ENCODE measurements at regions of chr9 and their contacts with region 1.

Region 1: DNA sequence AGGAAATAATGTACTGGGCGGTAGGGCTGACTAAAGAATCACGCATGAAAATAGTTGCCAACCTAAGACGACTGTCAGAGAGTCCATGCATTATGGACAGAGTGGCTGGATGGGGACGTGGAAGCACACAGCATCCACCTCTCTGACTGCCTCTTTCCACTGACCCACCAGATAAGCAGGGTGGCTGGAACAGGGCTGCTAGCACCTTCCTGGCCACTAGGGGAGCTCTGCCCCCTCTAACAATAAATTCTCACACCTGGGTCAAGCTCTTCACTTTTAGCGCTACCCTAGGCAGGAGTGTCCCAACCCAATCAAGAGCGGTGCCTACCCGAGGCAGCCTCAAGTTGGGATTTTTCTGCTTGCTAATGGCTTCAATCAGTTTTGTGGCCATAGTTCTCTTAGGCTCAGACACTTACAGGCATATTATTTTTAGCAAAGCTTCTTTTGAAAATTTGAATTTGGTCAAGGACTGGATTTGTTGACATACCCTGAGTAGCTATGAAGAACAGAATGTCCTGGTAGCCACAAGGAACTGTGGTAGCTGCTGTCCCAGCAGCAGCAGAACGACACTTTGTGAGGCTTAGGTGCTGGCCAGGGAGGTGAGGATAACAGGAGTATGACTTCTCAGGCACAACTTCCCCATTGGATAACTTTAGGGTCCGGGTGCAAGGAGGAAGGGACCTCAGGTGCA is 6.9 kb upstream of the TPM2 start:
- DNase-seq: peak; percentile 85
- H3K4me3 ChIP-seq: no peak overlapping the region; a peak in 1 of 4 replicates
- H3K27ac ChIP-seq: peak overlapping the region in 1 of 2 experiments; percentile 77; a peak in 1 of 4 replicates
- H3K4me1 ChIP-seq: 0 out of 4 replicates have a peak, but pooled peaks cover 0 to 1% of the 10 kb centered on the region in 2 experiments
- H3K27me3 ChIP-seq: no peaks in the 10 kb centered on the region
- CTCF ChIP-seq: peak; percentile 86
- EP300 ChIP-seq: no peak
- RAD21 ChIP-seq: peak; percentile 55

Region 2: DNA sequence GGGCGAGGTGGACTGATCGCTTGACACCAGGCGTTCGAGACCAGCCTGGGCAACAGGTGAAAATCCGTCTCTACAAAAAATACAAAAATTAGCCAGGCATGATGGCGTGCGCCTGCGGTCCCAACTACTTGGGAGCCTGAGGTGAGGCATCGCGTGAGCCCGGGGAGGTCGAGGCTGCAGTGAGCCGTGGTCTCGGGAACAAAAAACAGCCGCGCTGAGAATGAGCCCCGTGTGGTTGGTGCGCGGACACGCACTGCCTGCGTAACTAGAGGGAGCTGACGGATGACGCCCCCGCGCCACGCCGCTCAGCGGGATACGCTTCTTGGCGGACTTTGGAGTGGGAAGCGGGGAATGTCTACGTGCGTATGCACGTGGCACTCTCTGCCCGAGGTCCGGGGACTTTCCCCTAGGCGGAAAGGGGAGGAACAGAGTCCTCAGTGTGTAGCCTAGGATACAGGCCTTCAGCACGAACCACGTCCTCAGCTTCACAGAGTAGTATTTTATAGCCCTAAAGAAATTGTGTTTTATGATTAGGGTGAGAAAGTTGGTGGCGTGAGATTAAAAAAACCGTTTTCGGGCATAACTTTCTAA is 39.0 kb before region 1 on chr9 and contains the start of gene RMRP:
- CTCF ChIA-PET with region 1: interaction called, 38 read pairs
- POLR2A ChIA-PET with region 1: no interaction called
- DNase-seq: peak; percentile 91
- H3K4me3 ChIP-seq: peak within 1 kb of the TSS; percentile 70 to 82
- H3K27ac ChIP-seq: peak within 1 kb of the TSS; percentile 97 to 98
- H3K4me1 ChIP-seq: peaks cover 0 to 12% of the 10 kb centered on the region in 2 experiments; a peak in 1 of 4 replicates
- H3K27me3 ChIP-seq: no peaks in the 10 kb centered on the region
- CTCF ChIP-seq: 0 out of 2 replicates have a peak, but pooled peaks have one; percentile 27
- EP300 ChIP-seq: peak in 1 of 2 experiments; percentile 74; a peak in 2 of 4 replicates
- RAD21 ChIP-seq: no peak
- polyA plus RNA-seq, gene RMRP: 64.9 and 157 TPM in 2 replicates

Region 3: GRCh38 chr9:35675732-35676392 is 20.8 kb before region 1 on chr9:
- CTCF ChIA-PET with region 1: interaction called, 14 read pairs
- POLR2A ChIA-PET with region 1: interaction called, 4 read pairs
- DNase-seq: peak; percentile 96
- H3K4me3 ChIP-seq: peak overlapping the region; percentile 19 to 38; a peak in 2 of 4 replicates
- H3K27ac ChIP-seq: no peak overlapping the region; a peak in 1 of 4 replicates
- H3K4me1 ChIP-seq: peaks cover 0 to 13% of the 10 kb centered on the region in 2 experiments; a peak in 1 of 4 replicates
- H3K27me3 ChIP-seq: no peaks in the 10 kb centered on the region
- CTCF ChIP-seq: no peak
- EP300 ChIP-seq: no peak
- RAD21 ChIP-seq: no peak

Region 4: GRCh38 chr9:35716230-35716629 is 19.6 kb after region 1 on chr9:
- CTCF ChIA-PET with region 1: interaction called, 183 read pairs
- POLR2A ChIA-PET with region 1: interaction called, 3 read pairs
- DNase-seq: no peak
- H3K4me3 ChIP-seq: no peak overlapping the region
- H3K27ac ChIP-seq: no peak overlapping the region
- H3K4me1 ChIP-seq: no peaks in the 10 kb centered on the region
- H3K27me3 ChIP-seq: no peaks in the 10 kb centered on the region
- CTCF ChIP-seq: no peak
- EP300 ChIP-seq: no peak
- RAD21 ChIP-seq: no peak

Region 5: DNA sequence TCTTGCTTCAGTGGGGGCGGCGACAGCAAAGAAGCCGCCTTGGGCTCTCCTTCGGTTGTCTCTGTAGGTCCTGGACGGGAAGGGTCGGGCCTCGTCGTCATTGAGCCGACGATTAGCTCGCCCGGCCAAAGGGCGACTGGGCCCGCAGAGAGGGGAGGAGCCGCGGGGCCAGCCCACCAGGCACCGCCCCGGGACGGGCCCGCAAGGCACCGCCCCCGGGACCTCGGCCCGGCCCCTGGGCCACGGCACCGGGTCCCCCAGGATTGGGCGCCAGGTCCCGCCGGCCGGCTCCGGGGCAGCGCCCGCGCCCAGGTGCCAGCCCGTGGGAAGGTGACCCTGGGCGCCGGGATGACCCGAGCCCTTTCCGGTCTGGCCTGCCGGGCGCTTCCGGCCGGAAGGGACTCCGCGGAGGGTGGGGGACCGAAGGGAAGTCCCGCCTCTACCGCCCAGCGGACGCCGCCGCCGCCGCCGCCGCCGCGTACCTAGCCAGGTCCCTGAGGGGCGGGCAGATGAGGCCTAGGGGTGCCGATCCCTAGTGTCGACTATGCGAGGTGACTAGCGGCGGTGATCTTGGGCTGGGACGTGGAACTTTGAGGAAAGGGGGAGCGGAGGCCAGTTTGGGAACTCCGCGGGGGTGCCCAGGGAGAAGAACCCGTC is 52.3 kb after region 1 on chr9 and contains the starts of genes GBA2 and RGP1:
- CTCF ChIA-PET with region 1: interaction called, 13 read pairs
- POLR2A ChIA-PET with region 1: no interaction called
- DNase-seq: peak; percentile 94
- H3K4me3 ChIP-seq: peak within 1 kb of the TSS; percentile 97 to 98
- H3K27ac ChIP-seq: peak within 1 kb of the TSS; percentile 70 to 79; a peak in 3 of 4 replicates
- H3K4me1 ChIP-seq: peaks cover 12 to 33% of the 10 kb centered on the region in 2 experiments; a peak in 2 of 4 replicates
- H3K27me3 ChIP-seq: no peaks in the 10 kb centered on the region
- CTCF ChIP-seq: no peak
- EP300 ChIP-seq: peak in 1 of 2 experiments; percentile 54; a peak in 1 of 4 replicates
- RAD21 ChIP-seq: no peak
- polyA plus RNA-seq, gene GBA2: 71.5 and 98.2 TPM in 2 replicates
- polyA plus RNA-seq, gene RGP1: 16.1 and 18.6 TPM in 2 replicates

Region 6: GRCh38 chr9:35872505-35872904 is 175.8 kb after region 1 on chr9:
- CTCF ChIA-PET with region 1: no interaction called
- POLR2A ChIA-PET with region 1: no interaction called
- DNase-seq: no peak
- H3K4me3 ChIP-seq: no peak overlapping the region
- H3K27ac ChIP-seq: no peak overlapping the region
- H3K4me1 ChIP-seq: no peaks in the 10 kb centered on the region; a peak in 1 of 4 replicates
- H3K27me3 ChIP-seq: no peaks in the 10 kb centered on the region
- CTCF ChIP-seq: no peak
- EP300 ChIP-seq: no peak
- RAD21 ChIP-seq: no peak

Region 7: DNA sequence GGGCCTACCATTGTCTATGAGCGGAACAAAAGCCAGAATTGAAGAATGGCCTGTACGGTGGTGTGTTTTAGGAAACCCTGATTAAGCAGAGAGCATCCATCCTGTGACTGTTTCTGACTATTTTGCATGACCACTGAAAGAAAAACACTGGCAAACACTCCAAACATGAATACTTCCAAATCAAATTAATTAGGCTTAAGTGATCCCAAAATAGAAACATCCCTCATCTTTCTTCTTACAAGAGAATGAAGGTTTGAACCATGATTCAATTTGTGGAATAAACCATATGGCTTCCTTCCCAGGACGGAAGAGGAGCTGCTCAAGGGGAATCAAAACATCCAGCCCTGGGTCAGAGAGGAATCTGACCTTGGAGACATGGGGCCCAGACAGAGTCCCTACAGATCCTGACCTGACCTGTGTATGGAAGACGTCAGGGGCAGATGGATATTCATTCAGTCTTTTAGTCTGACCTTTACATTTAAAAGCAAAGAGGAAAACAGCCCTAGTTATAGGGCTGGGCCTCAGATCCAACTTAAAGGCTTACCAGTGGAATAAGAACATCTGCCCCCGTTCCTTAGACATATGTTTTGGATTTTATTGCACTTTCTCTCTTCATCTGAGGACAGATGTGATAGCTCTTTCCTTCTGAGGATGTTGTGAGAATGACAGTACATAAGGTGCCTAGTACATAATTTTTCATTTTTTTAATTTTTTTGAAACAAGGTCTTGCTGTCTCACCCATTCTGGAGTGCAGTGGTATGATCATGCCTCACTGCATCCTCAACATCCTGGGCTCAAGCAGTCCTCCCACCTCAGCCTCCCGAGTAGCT is 322.4 kb after region 1 on chr9:
- CTCF ChIA-PET with region 1: no interaction called
- POLR2A ChIA-PET with region 1: no interaction called
- DNase-seq: peak; percentile 33
- H3K4me3 ChIP-seq: no peak overlapping the region
- H3K27ac ChIP-seq: peak overlapping the region; percentile 66 to 68
- H3K4me1 ChIP-seq: peaks cover 0 to 7% of the 10 kb centered on the region in 2 experiments; a peak in 2 of 4 replicates
- H3K27me3 ChIP-seq: no peaks in the 10 kb centered on the region
- CTCF ChIP-seq: no peak
- EP300 ChIP-seq: peak; percentile 8 to 51; a peak in 2 of 4 replicates
- RAD21 ChIP-seq: no peak